Naive thymus-derived CD4-positive, alpha-beta T cell (primary cell): ENCODE measurements at regions of chr1 and their contacts with region 1.

Region 1: GRCh38 chr1:2391041-2391930 is at the starts of genes MORN1 and RER1:
- DNase-seq: peak; percentile 96 to 100 (median 99)
- ATAC-seq: peak; percentile 98
- H3K4me3 ChIP-seq: peak within 1 kb of the TSS; percentile 77
- H3K4me3 Mint-ChIP-seq: peak within 1 kb of the TSS; percentile 80 to 93 (median 90)
- H3K27ac ChIP-seq: peak within 1 kb of the TSS; percentile 82
- H3K27ac Mint-ChIP-seq: peak within 1 kb of the TSS; percentile 63 to 96 (median 88)
- H3K4me1 ChIP-seq: peaks cover 23 to 33% of the 10 kb centered on the region in 2 donors
- H3K4me1 Mint-ChIP-seq: peaks cover 23 to 41% (median 31%) of the 10 kb centered on the region in 7 donors
- H3K27me3 ChIP-seq: no peaks in the 10 kb centered on the region
- H3K27me3 Mint-ChIP-seq: no peaks in the 10 kb centered on the region
- total RNA-seq, gene MORN1: 8.5 to 16.4 (median 11.2) TPM
- total RNA-seq, gene RER1: 71.0 to 150 (median 136) TPM

Region 2: DNA sequence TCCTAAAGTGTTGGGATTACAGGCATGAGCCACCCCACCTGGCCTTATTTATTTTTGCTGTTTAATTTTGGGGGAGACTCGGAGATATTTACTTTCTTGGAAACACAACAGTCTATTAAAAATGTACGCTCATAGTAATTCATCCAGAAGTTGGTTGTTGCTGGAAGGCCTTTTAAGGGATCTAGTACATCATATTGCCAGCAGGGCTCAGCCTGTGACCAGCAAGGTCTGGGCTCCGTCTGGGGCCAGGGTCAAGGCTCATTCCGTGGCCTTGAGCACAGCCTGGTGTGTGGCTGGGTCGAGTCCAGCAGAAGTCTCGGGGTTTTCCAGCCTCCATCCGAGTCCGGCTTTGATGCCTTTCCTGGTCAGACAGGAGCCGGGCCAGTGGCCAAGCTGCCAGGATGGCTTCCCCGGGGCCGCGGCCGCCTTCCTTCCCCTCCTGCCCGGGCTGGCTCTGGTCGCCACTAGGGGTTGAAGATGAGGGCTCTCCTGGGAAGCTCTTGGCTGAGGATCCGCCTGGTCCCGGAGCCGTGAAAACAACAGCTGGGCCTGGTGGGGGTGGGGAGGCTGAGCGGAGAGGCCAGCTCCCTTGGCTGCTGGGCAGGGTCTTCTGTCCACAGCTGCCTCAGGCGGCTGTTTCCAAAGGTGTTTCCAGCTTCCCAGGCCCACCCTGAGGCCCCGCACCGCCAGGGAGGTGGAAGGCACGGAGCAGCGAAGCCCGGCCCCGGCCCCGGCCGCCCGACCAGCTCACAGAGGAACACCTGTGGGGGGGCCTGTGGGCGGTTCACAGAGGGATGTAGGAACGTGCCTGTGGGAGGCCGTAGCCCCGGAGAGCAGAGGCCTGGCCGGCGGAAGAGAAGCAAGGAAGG is 960.9 kb before region 1 on chr1:
- CTCF ChIA-PET with region 1: no interaction called
- POLR2A ChIA-PET with region 1: no interaction called
- intact Hi-C with region 1: no loop called
- DNase-seq: no peak
- ATAC-seq: no peak
- H3K4me3 ChIP-seq: no peak overlapping the region
- H3K4me3 Mint-ChIP-seq: no peak overlapping the region
- H3K27ac ChIP-seq: no peak overlapping the region
- H3K27ac Mint-ChIP-seq: no peak overlapping the region
- H3K4me1 ChIP-seq: peaks cover 0 to 4% of the 10 kb centered on the region in 2 donors
- H3K4me1 Mint-ChIP-seq: peaks cover 0 to 18% (median 8%) of the 10 kb centered on the region in 7 donors
- H3K27me3 ChIP-seq: peaks cover 0 to 9% of the 10 kb centered on the region in 2 donors
- H3K27me3 Mint-ChIP-seq: peaks cover 17 to 27% (median 20%) of the 10 kb centered on the region in 5 donors

Region 3: DNA sequence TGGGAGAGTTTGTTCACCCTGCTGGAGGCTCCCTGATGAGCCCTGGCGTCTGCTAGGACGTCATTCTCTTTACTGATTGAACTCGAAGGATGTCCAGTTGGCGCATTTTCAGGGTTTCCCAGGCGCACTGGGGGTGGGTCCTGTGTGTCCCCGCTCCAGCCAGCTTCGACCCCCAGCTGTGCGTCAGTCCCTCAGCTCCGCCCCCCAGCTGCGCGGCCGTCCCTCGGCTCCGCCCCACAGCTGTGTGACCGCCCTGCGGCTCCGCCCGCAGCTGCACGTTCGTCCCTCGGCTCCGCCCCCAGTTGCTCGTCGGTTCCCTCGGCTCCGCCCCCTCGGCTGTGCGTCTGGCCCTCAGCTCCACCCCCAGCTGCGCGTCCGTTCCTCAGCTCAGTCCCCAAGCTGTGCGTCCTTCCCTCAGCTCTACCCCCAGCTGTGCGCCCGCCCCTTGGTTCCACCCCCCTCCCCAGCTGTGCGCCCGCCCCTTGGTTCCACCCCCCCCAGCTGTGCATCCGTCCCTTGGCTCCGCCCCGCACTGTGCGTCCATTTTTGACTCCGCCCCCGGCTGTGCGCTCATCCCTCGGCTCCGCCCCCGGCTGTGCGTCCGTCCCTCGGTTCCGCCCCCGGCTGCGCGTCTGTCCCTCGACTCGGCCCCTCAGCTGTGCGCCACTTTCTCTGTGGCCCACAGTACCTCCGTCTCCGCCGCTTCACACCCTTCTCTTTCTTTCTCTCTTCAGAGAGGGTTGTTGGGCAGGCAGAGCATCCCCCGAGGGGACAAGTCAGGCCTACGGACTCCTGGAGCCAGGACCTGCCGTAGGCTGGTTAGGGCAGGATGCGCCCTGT is 258.0 kb before region 1 on chr1:
- CTCF ChIA-PET with region 1: interaction called, 3 read pairs
- POLR2A ChIA-PET with region 1: no interaction called
- intact Hi-C with region 1: loop called in 1 of 2 experiments (anchors 2 kb)
- DNase-seq: peak; percentile 93 to 97 (median 96)
- ATAC-seq: peak; percentile 94
- H3K4me3 ChIP-seq: peak overlapping the region; percentile 66
- H3K4me3 Mint-ChIP-seq: peak overlapping the region; percentile 73 to 88 (median 83)
- H3K27ac ChIP-seq: peak overlapping the region; percentile 80
- H3K27ac Mint-ChIP-seq: peak overlapping the region; percentile 54 to 96 (median 93)
- H3K4me1 ChIP-seq: peaks cover 10% of the 10 kb centered on the region in 2 donors
- H3K4me1 Mint-ChIP-seq: peaks cover 5 to 32% (median 17%) of the 10 kb centered on the region in 7 donors
- H3K27me3 ChIP-seq: no peaks in the 10 kb centered on the region
- H3K27me3 Mint-ChIP-seq: no peaks in the 10 kb centered on the region

Region 4: DNA sequence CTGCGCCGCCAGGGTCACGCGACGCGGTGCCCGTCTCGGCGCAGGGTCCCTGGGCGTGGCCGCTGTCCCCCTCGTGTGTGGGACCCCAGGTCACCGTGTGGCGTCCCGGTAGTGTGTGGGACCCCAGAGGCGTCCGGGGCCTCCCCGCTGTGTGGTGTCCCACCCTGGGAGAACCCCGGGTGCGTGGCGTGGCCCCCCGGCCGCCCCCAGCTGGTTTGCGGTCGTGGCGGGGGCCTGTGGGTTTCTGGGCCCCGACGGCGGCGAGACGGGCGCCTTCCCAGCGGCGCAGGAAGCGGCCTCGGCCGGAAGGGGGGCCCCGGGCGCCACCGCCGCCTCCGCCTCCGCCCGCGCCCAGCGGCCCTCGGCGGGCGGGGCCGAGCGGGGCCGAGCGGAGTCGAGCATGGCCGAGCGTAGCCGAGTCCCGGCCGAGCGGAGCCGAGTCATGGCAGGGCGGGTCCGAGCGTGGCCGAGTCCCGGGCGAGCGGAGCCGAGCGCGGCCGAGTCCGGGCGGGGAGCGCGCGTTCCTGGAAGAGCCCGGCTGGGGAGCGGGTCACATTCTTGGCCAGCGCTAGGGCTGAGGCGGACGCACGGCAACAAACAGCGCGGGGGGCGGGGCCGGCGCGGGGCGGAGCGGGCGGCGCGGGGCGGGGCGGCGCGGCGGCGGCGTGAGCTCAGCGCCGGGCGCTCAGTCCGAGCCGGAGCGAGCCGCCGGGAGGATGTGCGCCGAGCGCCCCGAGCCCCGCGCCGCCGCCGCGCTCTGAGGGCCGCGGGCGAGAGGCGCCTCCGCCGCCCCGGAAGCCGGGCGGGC is 163.7 kb before region 1 on chr1:
- CTCF ChIA-PET with region 1: no interaction called
- POLR2A ChIA-PET with region 1: interaction called, 5 read pairs
- intact Hi-C with region 1: loop called in 1 of 2 experiments (anchors 1 kb)
- DNase-seq: peak; percentile 87 to 98 (median 97)
- ATAC-seq: peak; percentile 88
- H3K4me3 ChIP-seq: peak overlapping the region; percentile 33
- H3K4me3 Mint-ChIP-seq: peak overlapping the region in 9 of 10 donors; percentile 56 to 83 (median 69)
- H3K27ac ChIP-seq: peak overlapping the region; percentile 72
- H3K27ac Mint-ChIP-seq: peak overlapping the region in 4 of 9 donors; percentile 26 to 80 (median 62)
- H3K4me1 ChIP-seq: peaks cover 5 to 14% of the 10 kb centered on the region in 2 donors
- H3K4me1 Mint-ChIP-seq: peaks cover 9 to 24% (median 17%) of the 10 kb centered on the region in 7 donors
- H3K27me3 ChIP-seq: no peaks in the 10 kb centered on the region
- H3K27me3 Mint-ChIP-seq: peaks cover 0 to 8% (median 0%) of the 10 kb centered on the region in 5 donors

Region 5: GRCh38 chr1:2412519-2413233 is 21.4 kb after region 1 on chr1 and contains the start of gene PEX10:
- CTCF ChIA-PET with region 1: interaction called, 6 read pairs
- POLR2A ChIA-PET with region 1: interaction called, 20 read pairs
- intact Hi-C with region 1: loop called (anchors 1 kb)
- DNase-seq: peak; percentile 95 to 100 (median 98)
- ATAC-seq: peak; percentile 97
- H3K4me3 ChIP-seq: peak within 1 kb of the TSS; percentile 71
- H3K4me3 Mint-ChIP-seq: peak within 1 kb of the TSS; percentile 83 to 91 (median 86)
- H3K27ac ChIP-seq: peak within 1 kb of the TSS; percentile 95
- H3K27ac Mint-ChIP-seq: peak within 1 kb of the TSS; percentile 31 to 94 (median 87)
- H3K4me1 ChIP-seq: peaks cover 37 to 45% of the 10 kb centered on the region in 2 donors
- H3K4me1 Mint-ChIP-seq: peaks cover 27 to 45% (median 35%) of the 10 kb centered on the region in 7 donors
- H3K27me3 ChIP-seq: no peaks in the 10 kb centered on the region
- H3K27me3 Mint-ChIP-seq: no peaks in the 10 kb centered on the region
- total RNA-seq, gene PEX10: 8.7 to 14.9 (median 12.3) TPM

Region 6: GRCh38 chr1:2611031-2611501 is 219.8 kb after region 1 on chr1:
- CTCF ChIA-PET with region 1: no interaction called
- POLR2A ChIA-PET with region 1: no interaction called
- intact Hi-C with region 1: no loop called
- DNase-seq: peak in 3 of 9 donors; percentile 6 to 25 (median 6)
- ATAC-seq: peak; percentile 60
- H3K4me3 ChIP-seq: no peak overlapping the region
- H3K4me3 Mint-ChIP-seq: no peak overlapping the region
- H3K27ac ChIP-seq: no peak overlapping the region
- H3K27ac Mint-ChIP-seq: no peak overlapping the region
- H3K4me1 ChIP-seq: no peaks in the 10 kb centered on the region
- H3K4me1 Mint-ChIP-seq: no peaks in the 10 kb centered on the region
- H3K27me3 ChIP-seq: no peaks in the 10 kb centered on the region
- H3K27me3 Mint-ChIP-seq: peaks cover 0 to 9% (median 0%) of the 10 kb centered on the region in 5 donors

Region 7: GRCh38 chr1:2642560-2643413 is 251.5 kb after region 1 on chr1:
- CTCF ChIA-PET with region 1: no interaction called
- POLR2A ChIA-PET with region 1: no interaction called
- intact Hi-C with region 1: loop called in 1 of 2 experiments (anchors 1 kb)
- DNase-seq: peak; percentile 92 to 97 (median 96)
- ATAC-seq: peak; percentile 89
- H3K4me3 ChIP-seq: peak overlapping the region; percentile 87
- H3K4me3 Mint-ChIP-seq: peak overlapping the region; percentile 85 to 96 (median 88)
- H3K27ac ChIP-seq: peak overlapping the region; percentile 97
- H3K27ac Mint-ChIP-seq: peak overlapping the region in 8 of 9 donors; percentile 76 to 93 (median 86)
- H3K4me1 ChIP-seq: peaks cover 9% of the 10 kb centered on the region in 2 donors
- H3K4me1 Mint-ChIP-seq: peaks cover 6 to 19% (median 15%) of the 10 kb centered on the region in 7 donors
- H3K27me3 ChIP-seq: no peaks in the 10 kb centered on the region
- H3K27me3 Mint-ChIP-seq: peaks cover 0 to 3% (median 0%) of the 10 kb centered on the region in 5 donors